ENCODE measurements at regions of chr2 and their contacts with region 1.

Region 1: DNA sequence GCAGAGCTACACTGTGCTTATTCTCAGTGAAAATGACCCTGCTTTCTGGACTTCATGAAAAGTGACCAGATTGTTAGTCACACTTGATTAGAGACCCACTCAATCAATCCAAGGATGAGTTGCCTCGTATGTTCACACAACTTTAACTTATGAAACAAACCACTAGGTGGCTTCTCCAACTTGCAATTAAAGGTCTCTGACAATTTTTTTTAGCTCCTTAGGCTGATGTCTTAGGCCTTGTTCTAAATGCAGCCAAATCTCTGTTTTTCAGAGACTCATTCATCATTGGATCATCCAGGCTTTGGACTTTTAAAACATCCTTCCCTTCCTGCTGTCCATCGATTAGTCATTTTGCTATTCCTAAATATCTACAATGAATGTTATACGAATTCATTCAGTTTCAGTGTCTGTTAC is 63.4 kb downstream of the MREG start:
- DNase-seq: no peak
- H3K4me3 ChIP-seq: no peak overlapping the region
- CTCF ChIP-seq: peak; percentile 39

Region 2: GRCh38 chr2:215961981-215962380 is 12.0 kb after region 1 on chr2:
- CTCF ChIA-PET with region 1: interaction called, 17 read pairs
- POLR2A ChIA-PET with region 1: no interaction called
- DNase-seq: no peak
- H3K4me3 ChIP-seq: no peak overlapping the region
- CTCF ChIP-seq: no peak

Region 3: GRCh38 chr2:215967590-215968378 is 17.8 kb after region 1 on chr2:
- CTCF ChIA-PET with region 1: interaction called, 17 read pairs
- POLR2A ChIA-PET with region 1: no interaction called
- DNase-seq: no peak
- H3K4me3 ChIP-seq: no peak overlapping the region
- CTCF ChIP-seq: no peak

Region 4: GRCh38 chr2:215973954-215974702 is 24.1 kb after region 1 on chr2:
- CTCF ChIA-PET with region 1: interaction called, 10 read pairs
- POLR2A ChIA-PET with region 1: no interaction called
- DNase-seq: no peak
- H3K4me3 ChIP-seq: no peak overlapping the region
- CTCF ChIP-seq: no peak

Region 5: DNA sequence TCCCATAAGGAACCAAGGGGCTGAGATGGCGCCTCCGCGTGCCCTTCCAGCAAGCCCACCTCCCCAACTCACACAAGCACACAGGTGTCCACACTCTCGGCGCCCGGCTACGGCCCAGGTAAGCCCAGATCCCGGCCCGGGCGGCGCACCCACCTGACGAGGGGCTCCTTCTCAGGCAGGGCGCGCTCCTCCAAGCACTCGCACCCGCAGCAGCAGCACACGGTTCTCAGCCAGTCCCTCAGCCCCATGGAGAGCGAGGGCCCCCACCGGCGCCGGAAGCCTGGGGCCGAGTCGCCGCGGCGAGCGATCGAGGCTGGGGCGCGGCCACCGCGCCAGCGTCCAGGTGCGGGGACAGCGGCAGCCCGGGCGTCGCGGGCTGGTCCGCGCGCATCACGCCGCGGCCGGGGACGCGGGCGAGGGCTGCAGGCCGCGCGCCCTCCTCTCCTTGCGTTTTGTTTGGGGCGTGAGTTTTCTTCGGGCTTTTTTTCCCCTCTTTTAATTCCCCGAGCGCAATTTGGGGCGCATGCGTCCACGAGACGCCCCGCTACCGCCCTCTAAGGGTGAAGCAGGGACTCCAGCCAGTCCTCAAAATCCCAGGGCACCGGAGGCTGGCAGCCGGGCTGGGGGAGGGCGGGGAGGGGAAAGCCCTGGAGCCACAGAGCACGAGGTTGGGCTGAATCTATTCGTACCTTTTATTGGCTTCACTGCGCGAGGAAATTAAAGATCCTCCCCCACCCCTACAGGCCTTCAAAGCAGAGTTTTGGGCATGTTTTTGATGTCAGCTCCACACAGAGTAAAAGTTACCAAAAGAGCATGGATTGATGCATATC is 63.3 kb after region 1 on chr2 and contains the start of gene MREG:
- CTCF ChIA-PET with region 1: interaction called, 22 read pairs
- POLR2A ChIA-PET with region 1: no interaction called
- DNase-seq: no peak
- H3K4me3 ChIP-seq: peak within 1 kb of the TSS; percentile 70
- CTCF ChIP-seq: peak; percentile 86

Region 6: GRCh38 chr2:216023055-216023648 is 73.2 kb after region 1 on chr2:
- CTCF ChIA-PET with region 1: interaction called, 83 read pairs
- POLR2A ChIA-PET with region 1: no interaction called
- DNase-seq: no peak
- H3K4me3 ChIP-seq: no peak overlapping the region
- CTCF ChIP-seq: peak; percentile 63